ENCODE measurements at regions of chr3 and their contacts with region 1.

Region 1: DNA sequence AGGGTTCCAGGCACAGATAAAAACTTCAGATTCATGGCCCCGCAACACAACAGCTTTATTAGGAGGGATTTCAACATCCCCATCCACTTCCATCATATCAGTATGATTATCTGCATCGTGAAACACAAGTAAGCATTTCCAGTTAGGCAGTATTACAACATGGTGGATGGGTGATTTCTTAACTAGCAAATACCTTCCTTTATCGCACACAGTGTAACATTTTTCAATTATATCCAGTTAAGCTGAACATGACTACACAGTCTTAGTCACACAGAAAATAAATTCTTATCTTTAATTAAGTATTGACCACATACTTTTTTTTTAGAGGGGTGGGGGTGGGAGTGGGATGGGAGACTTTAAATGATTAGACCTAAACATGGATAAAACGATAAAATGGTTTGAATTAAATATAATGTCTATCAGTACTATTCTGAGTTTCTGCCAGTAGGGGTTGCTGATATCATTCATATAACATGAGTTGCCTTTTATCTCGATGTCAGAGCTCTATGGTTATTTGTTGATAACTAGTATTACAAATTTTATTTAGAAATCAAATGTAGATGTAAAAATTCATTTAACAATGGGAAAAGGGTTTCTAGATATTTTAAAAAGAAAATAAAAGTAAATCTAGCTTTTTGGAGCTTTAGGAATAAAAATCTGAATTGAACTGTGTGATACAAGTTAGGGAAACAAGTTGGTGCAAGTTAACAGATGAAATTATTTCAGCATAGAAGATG is 146.6 kb downstream of the TBL1XR1 start:
- DNase-seq: no peak
- H3K4me3 Mint-ChIP-seq: no peak overlapping the region
- H3K27ac Mint-ChIP-seq: no peak overlapping the region
- H3K4me1 Mint-ChIP-seq: peaks cover 11% of the 10 kb centered on the region
- H3K27me3 Mint-ChIP-seq: no peaks in the 10 kb centered on the region

Region 2: GRCh38 chr3:176415701-176416191 is 634.9 kb before region 1 on chr3:
- CTCF ChIA-PET with region 1: no interaction called
- intact Hi-C with region 1: no loop called
- DNase-seq: no peak
- H3K4me3 Mint-ChIP-seq: no peak overlapping the region
- H3K27ac Mint-ChIP-seq: no peak overlapping the region
- H3K4me1 Mint-ChIP-seq: no peaks in the 10 kb centered on the region
- H3K27me3 Mint-ChIP-seq: no peaks in the 10 kb centered on the region

Region 3: DNA sequence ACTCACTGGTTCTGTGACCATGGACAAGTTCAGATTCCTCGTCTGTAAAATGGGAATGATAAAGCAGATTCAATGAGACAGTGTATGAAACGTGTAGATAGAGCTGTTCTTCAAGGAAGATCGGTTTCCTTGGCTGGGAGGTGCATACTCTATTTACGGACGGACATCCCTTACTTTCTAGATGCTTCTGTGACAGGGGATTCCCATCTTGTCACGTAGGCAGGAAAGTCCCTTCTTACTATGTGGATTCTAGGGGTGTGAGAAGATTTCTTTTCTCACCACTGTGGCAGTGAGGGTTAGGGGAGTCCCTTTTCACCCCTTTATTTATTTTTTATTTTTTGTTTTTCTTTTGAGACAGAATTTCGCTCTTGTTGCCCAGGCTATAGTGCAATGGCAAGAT is 327.5 kb after region 1 on chr3:
- CTCF ChIA-PET with region 1: no interaction called
- intact Hi-C with region 1: loop called (anchors 2 kb)
- DNase-seq: no peak
- H3K4me3 Mint-ChIP-seq: no peak overlapping the region
- H3K27ac Mint-ChIP-seq: no peak overlapping the region
- H3K4me1 Mint-ChIP-seq: peaks cover 2% of the 10 kb centered on the region
- H3K27me3 Mint-ChIP-seq: no peaks in the 10 kb centered on the region

Region 4: GRCh38 chr3:177597311-177598096 is 546.8 kb after region 1 on chr3:
- CTCF ChIA-PET with region 1: no interaction called
- intact Hi-C with region 1: loop called (anchors 10 kb)
- DNase-seq: peak; percentile 51
- H3K4me3 Mint-ChIP-seq: peak overlapping the region; percentile 54
- H3K27ac Mint-ChIP-seq: peak overlapping the region; percentile 91
- H3K4me1 Mint-ChIP-seq: peaks cover 66% of the 10 kb centered on the region
- H3K27me3 Mint-ChIP-seq: no peaks in the 10 kb centered on the region

Region 5: GRCh38 chr3:177777699-177778098 is 727.0 kb after region 1 on chr3:
- CTCF ChIA-PET with region 1: interaction called, 3 read pairs
- intact Hi-C with region 1: loop called (anchors 1 kb)
- DNase-seq: peak; percentile 72
- H3K4me3 Mint-ChIP-seq: no peak overlapping the region
- H3K27ac Mint-ChIP-seq: no peak overlapping the region
- H3K4me1 Mint-ChIP-seq: peaks cover 11% of the 10 kb centered on the region
- H3K27me3 Mint-ChIP-seq: no peaks in the 10 kb centered on the region

Region 6: DNA sequence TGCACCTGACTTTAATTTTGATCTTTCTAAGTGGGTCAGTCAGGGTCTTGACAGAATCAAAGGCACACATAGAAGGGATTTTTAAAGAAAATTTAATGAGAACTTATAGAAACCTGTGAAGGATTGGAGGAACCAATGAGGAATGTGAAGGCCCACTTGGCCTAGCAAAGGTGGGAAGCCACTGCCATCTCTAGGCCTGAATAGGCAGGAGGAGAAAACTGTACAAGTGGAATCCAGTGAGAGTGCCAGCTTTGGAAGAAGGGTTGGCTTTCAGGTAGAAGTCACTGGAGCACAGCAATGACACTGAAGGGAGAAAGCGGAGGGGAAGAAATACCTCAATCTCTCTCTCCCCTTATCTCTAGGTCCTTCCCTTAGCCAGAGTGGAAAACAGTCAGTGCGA is 1104.9 kb after region 1 on chr3:
- CTCF ChIA-PET with region 1: no interaction called
- intact Hi-C with region 1: loop called (anchors 2 kb)
- DNase-seq: peak; percentile 14
- H3K4me3 Mint-ChIP-seq: no peak overlapping the region
- H3K27ac Mint-ChIP-seq: no peak overlapping the region
- H3K4me1 Mint-ChIP-seq: no peaks in the 10 kb centered on the region
- H3K27me3 Mint-ChIP-seq: no peaks in the 10 kb centered on the region

Region 7: DNA sequence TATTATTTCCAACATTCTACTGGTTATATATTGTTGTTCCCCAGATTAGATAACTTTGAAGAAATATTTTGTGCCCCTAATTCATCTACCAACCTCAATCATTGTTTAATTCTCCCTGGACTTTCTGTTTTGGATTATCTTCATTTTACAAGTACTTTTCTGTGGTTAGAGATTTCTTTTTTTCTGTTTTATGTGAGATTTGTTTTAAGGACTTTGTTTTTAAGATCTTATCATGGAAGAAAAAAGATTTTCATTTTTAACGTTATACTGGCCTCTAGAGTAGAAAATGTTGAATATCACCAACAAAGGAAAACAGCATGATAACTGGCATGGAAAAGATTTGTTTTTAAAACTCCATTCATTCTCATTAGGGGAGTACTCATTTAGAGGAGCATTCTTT is 1274.7 kb after region 1 on chr3:
- CTCF ChIA-PET with region 1: no interaction called
- intact Hi-C with region 1: loop called (anchors 5 kb)
- DNase-seq: no peak
- H3K4me3 Mint-ChIP-seq: no peak overlapping the region
- H3K27ac Mint-ChIP-seq: no peak overlapping the region
- H3K4me1 Mint-ChIP-seq: no peaks in the 10 kb centered on the region
- H3K27me3 Mint-ChIP-seq: no peaks in the 10 kb centered on the region